ENCODE measurements at regions of chr1 and their contacts with region 1.

Region 1: DNA sequence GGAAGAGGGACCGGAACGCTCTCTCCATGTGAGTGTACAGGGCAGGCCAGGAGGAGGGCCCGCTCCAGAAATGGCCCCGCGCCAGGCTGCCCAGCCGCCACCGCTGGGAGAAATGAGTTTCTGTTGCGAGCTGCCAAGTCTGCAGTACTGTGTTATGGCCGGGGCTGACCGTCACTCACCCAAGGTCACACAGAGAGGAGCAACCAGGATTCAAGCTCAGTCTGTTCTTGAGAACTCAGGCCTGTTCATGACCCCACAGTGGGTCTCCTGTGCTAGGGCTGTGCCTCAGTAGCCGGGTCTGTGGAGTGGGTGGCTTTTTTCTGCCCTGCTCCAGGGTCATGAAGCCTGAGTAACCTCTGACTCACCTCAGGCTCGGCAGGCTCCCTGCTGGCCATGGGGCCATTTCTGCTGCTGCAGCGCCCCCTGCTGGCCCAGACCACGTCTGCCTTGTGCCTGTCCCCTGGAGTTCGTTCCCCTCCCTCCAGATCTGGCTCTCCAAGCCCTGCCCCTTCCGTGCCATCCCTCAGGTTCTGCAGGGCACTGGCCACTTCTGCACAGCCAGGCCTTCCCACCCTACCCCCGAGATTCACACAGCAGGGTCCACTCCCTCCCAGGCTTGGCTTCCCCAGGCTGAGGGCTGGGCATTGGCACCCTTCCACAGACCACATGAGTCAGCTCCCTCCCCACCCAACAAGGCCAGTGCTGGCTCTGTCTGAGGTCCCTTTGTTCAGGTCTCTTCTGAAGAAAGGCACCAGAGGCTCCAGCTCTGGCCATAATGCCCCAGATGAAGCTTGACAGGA is 51.8 kb downstream of the EDN2 start:
- DNase-seq: peak; percentile 43
- H3K4me3 Mint-ChIP-seq: no peak overlapping the region
- H3K27ac Mint-ChIP-seq: no peak overlapping the region
- H3K4me1 Mint-ChIP-seq: no peaks in the 10 kb centered on the region
- H3K27me3 Mint-ChIP-seq: peaks cover 6% of the 10 kb centered on the region

Region 2: DNA sequence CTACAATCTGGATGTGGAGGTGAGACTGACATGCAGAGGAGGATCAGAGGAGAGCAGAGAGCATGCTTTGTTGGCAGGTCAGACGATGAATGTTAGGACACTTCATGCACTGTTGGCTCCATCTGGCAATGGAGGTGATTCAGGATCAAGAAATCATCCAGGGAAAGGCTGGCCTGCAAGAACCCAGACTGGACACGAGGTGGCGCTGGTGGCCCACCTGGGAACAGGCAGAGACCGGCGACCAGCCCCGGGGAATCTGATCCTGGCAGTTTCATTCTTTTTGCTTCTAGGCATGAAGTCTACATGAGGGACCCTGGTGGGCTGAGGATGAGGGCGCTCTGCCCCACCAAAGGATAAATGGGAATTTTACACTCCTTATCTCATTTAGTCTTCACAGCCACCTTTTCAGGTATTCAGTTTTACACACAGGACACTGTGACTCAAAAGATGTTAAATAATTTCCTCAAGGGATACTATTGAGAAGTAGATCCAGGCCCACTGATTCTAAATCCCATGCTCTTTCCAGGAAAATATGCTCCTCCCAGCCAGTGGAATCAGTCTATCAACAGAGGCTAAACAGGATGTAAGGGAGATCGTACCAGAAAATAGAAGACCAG is 164.4 kb before region 1 on chr1:
- intact Hi-C with region 1: loop called (anchors 1 kb)
- DNase-seq: peak; percentile 32
- H3K4me3 Mint-ChIP-seq: no peak overlapping the region
- H3K27ac Mint-ChIP-seq: no peak overlapping the region
- H3K4me1 Mint-ChIP-seq: no peaks in the 10 kb centered on the region
- H3K27me3 Mint-ChIP-seq: peaks cover 14% of the 10 kb centered on the region

Measured in activated T-helper 2 cell treated with anti-CD3 and anti-CD28 coated beads, Interferon-gamma antibody, Interleukin-2, Interleukin-4, amounts not matched to agents 10 μg/mL and 5 μg/mL and 100 μg/mL, durations not matched to agents 14 hours and 24 hours and 36 hours (primary cell).